ENCODE measurements at regions of chr20 and their contacts with region 1.

Region 1: DNA sequence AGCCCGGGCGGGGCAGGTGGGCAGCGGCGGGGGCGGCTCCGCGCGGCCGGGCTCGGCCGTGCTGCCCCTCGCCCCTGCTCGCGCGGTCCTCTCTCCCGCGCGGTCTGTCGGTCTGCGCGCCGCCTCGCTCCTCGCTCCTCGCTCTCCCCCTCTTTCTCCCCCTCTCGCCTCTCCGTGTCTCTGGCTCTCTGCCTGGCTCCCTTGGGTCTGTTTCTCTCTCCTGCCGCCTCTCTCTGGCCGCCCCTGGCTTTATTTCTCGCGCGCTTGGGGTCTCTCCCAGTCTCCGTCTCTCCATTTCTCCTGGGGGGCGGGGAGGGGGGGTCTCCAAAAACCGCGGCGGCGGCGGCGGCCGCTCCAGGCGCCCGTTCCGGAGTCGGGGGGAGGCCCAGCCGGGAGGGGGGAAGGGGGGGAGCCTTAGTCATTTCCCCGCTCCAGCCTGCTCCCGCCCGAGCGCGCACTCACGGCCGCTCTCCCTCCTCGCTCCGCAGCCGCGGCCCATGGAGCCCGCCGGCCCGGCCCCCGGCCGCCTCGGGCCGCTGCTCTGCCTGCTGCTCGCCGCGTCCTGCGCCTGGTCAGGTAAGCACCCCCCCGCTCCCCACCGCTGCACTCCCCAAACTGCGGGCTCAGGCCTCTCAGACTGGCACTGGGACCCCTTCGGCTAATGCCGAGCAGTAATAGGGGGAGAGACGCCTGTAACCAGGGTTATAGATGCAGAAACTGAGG is at the start of gene SIRPA:
- DNase-seq: peak; percentile 69 to 95 (median 74)

Region 2: DNA sequence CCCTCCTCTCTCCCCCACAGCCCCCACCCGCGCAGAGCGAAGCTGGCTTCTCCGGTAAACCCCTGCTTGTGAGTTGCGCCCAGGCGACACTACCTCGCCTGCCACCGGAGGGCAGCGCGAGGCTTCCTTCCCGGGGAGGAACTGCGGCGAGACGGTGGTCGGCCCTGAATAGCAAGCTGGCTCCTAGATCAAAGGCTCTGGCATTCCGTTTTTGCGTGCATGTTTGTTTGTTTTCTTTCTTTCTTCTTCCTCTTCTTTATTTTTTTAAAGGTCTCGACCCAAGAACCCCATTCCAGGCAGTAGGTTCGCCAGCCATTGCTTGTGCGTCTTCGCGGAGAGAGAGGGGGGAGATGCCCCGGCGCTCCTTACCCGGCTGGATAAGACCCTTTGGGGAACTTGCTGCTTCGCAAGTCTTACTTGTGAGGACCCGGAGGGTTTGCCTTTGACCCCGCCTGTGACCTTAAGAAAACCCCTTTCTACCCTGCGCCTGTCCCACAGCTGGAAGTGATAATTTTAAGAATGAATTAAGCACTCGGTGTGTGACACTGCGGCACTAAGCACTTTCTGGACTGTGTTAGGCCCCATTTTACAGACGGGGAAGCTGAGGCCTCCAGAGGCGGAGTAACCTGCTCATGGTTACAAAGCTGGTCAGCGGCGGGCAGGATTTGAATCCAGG is 92.6 kb before region 1 on chr20:
- intact Hi-C with region 1: loop called (anchors 2 kb)
- DNase-seq: peak; percentile 80 to 98 (median 90)

Region 3: GRCh38 chr20:1934721-1935573 is 39.8 kb after region 1 on chr20:
- intact Hi-C with region 1: loop called (anchors 5 kb)
- DNase-seq: peak in 2 of 10 donors; percentile 42 to 79

Region 4: DNA sequence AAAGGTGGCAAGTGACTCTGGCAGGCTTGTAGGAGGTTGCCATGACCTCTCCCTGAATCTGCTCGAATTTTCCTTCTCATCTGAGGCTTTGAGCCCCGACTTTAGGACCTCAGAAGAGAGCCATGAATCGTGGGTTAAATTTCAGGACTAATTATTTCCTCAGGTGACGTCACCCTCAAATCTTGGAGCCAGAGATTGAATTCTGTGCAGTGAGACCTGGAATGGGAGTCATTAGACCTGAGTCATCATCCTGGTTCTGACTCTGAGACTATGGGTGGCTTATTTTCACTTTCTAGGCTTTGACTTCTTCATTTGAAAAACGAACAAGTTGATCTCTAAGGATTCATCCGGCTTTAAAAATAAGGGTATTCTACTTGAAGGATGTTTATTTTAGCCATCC is 147.3 kb after region 1 on chr20:
- intact Hi-C with region 1: no loop called
- DNase-seq: no peak

Measured in posterior cingulate gyrus (tissue), 11 donors.